Esophagus muscularis mucosa (tissue), 4 donors: ENCODE measurements at regions of chr1 and their contacts with region 1.

Region 1: GRCh38 chr1:41045740-41046139 is 24.2 kb upstream of the SLFNL1 start:
- DNase-seq: no peak
- H3K4me3 ChIP-seq: no peak overlapping the region
- H3K27ac ChIP-seq: peak overlapping the region; percentile 53 to 75 (median 66)
- H3K4me1 ChIP-seq: peaks cover 24 to 28% (median 26%) of the 10 kb centered on the region in 4 donors
- H3K27me3 ChIP-seq: no peaks in the 10 kb centered on the region
- CTCF ChIP-seq: no peak
- EP300 ChIP-seq: no peak
- POLR2A ChIP-seq: no peak

Region 2: GRCh38 chr1:41122851-41123507 is 77.2 kb after region 1 on chr1:
- intact Hi-C with region 1: loop called (anchors 10 kb)
- DNase-seq: no peak
- H3K4me3 ChIP-seq: no peak overlapping the region
- H3K27ac ChIP-seq: no peak overlapping the region
- H3K4me1 ChIP-seq: no peaks in the 10 kb centered on the region
- H3K27me3 ChIP-seq: no peaks in the 10 kb centered on the region
- CTCF ChIP-seq: peak; percentile 22 to 53 (median 34)
- EP300 ChIP-seq: no peak
- POLR2A ChIP-seq: no peak

Region 3: DNA sequence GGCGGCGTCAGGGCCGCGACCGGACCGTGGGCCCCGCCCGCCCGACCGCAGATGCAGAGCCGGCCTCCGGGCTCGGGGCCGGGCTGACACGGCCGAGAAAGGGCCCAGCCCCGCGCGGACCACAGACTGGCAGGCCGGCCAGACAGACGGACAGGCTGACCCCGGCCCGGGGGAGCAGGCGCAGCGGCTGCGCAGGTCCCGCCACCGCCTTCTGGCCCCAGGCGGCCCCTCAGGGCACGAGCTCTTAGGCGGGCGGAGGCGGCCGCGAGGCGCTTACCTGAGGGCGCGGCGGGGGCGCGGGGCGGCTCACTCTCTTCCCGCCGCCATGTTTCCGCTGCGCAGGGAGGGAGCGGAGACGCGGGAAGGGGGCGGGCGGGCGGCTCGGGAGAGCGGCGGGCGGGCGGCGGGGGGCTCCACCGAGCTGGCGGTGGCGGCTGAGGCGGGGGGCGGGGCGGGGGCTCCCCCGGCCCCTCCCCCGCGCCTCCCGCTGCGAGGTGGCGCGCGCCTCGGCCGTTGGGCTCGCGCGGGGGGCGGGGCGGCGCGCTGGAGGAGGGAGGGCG is 196.1 kb after region 1 on chr1 and contains the start of gene SCMH1:
- intact Hi-C with region 1: loop called (anchors 10 kb)
- DNase-seq: no peak
- H3K4me3 ChIP-seq: peak within 1 kb of the TSS; percentile 78 to 92 (median 84)
- H3K27ac ChIP-seq: peak within 1 kb of the TSS; percentile 96 to 99 (median 98)
- H3K4me1 ChIP-seq: peaks cover 18 to 59% (median 49%) of the 10 kb centered on the region in 4 donors
- H3K27me3 ChIP-seq: no peaks in the 10 kb centered on the region
- CTCF ChIP-seq: no peak
- EP300 ChIP-seq: no peak
- POLR2A ChIP-seq: no peak
- total RNA-seq, gene SCMH1: 76.5 to 110 (median 92.4) TPM